PC-3 (cell line): ENCODE measurements at regions of chr19 and their contacts with region 1.

Region 1: GRCh38 chr19:29596885-29597525 is 9.1 kb upstream of the POP4 start:
- DNase-seq: peak; percentile 43
- ATAC-seq: peak; percentile 49; the same call in 1 of the 2 replicates
- H3K4me3 ChIP-seq: no peak overlapping the region
- H3K27ac ChIP-seq: no peak overlapping the region
- H3K4me1 ChIP-seq: no peaks in the 10 kb centered on the region
- H3K27me3 ChIP-seq: peaks cover 43% of the 10 kb centered on the region
- CTCF ChIP-seq: peak; percentile 51; the same call in 1 of the 2 replicates

Region 2: GRCh38 chr19:28466107-28467045 is 1130.6 kb before region 1 on chr19:
- CTCF ChIA-PET with region 1: no interaction called
- POLR2A ChIA-PET with region 1: no interaction called
- intact Hi-C with region 1: loop called (anchors 5 kb)
- DNase-seq: peak; percentile 19
- ATAC-seq: no peak
- H3K4me3 ChIP-seq: no peak overlapping the region
- H3K27ac ChIP-seq: no peak overlapping the region
- H3K4me1 ChIP-seq: no peaks in the 10 kb centered on the region
- H3K27me3 ChIP-seq: no peaks in the 10 kb centered on the region
- CTCF ChIP-seq: peak; percentile 68

Region 3: GRCh38 chr19:29294343-29294811 is 302.6 kb before region 1 on chr19:
- CTCF ChIA-PET with region 1: no interaction called
- POLR2A ChIA-PET with region 1: no interaction called
- intact Hi-C with region 1: no loop called
- DNase-seq: no peak
- ATAC-seq: no peak
- H3K4me3 ChIP-seq: no peak overlapping the region
- H3K27ac ChIP-seq: no peak overlapping the region
- H3K4me1 ChIP-seq: no peaks in the 10 kb centered on the region
- H3K27me3 ChIP-seq: no peaks in the 10 kb centered on the region
- CTCF ChIP-seq: no peak

Region 4: DNA sequence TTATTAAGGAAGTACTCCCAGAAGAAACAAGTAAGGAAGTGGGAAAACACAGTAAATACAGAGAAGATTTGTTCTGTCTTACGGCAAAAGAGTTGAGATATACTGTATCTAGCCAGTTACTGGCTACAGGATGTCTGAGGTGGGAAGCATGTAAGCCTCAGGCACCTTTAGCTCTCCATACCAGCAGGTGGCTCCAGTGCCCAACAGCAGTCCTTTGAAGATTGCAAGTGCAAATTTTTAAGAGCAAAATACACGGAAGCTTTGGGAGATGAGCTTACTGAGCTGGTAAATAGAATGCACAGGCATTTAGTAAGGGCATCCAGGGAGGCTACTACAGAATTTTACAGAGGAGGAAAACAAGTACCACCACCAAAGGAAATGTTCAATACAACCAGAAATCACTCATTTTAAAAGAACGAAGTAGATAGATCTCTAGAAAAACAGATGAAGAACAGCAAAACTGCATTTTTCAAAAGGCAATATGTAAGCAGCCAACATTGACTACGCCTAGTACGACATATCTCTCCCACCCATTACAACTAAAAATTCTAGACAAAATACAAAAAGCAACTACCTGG is 129.1 kb before region 1 on chr19:
- CTCF ChIA-PET with region 1: interaction called, 8 read pairs
- POLR2A ChIA-PET with region 1: no interaction called
- intact Hi-C with region 1: loop called (anchors 5 kb)
- DNase-seq: peak; percentile 54
- ATAC-seq: peak; percentile 69
- H3K4me3 ChIP-seq: no peak overlapping the region
- H3K27ac ChIP-seq: no peak overlapping the region
- H3K4me1 ChIP-seq: no peaks in the 10 kb centered on the region
- H3K27me3 ChIP-seq: no peaks in the 10 kb centered on the region; the same call in 1 of the 2 replicates
- CTCF ChIP-seq: peak; percentile 67

Region 5: GRCh38 chr19:29552454-29553280 is 44.3 kb before region 1 on chr19:
- CTCF ChIA-PET with region 1: no interaction called
- POLR2A ChIA-PET with region 1: no interaction called
- intact Hi-C with region 1: no loop called
- DNase-seq: no peak
- ATAC-seq: no peak
- H3K4me3 ChIP-seq: no peak overlapping the region
- H3K27ac ChIP-seq: no peak overlapping the region
- H3K4me1 ChIP-seq: no peaks in the 10 kb centered on the region
- H3K27me3 ChIP-seq: no peaks in the 10 kb centered on the region
- CTCF ChIP-seq: no peak

Region 6: GRCh38 chr19:29841559-29842367 is 244.8 kb after region 1 on chr19:
- CTCF ChIA-PET with region 1: no interaction called
- POLR2A ChIA-PET with region 1: no interaction called
- intact Hi-C with region 1: no loop called
- DNase-seq: peak; percentile 44
- ATAC-seq: no peak
- H3K4me3 ChIP-seq: no peak overlapping the region
- H3K27ac ChIP-seq: no peak overlapping the region
- H3K4me1 ChIP-seq: peaks cover 13% of the 10 kb centered on the region; the same call in 1 of the 2 replicates
- H3K27me3 ChIP-seq: no peaks in the 10 kb centered on the region
- CTCF ChIP-seq: no peak